ENCODE measurements at regions of chr3 and their contacts with region 1.

Region 1: GRCh38 chr3:53072653-53073552 is 27.0 kb upstream of the SFMBT1 start:
- DNase-seq: peak; percentile 82
- H3K4me3 Mint-ChIP-seq: peak overlapping the region; percentile 79
- H3K27ac Mint-ChIP-seq: no peak overlapping the region
- H3K4me1 Mint-ChIP-seq: no peaks in the 10 kb centered on the region
- H3K27me3 Mint-ChIP-seq: no peaks in the 10 kb centered on the region
- CTCF ChIP-seq: peak; percentile 89

Region 2: GRCh38 chr3:52428151-52429005 is 644.5 kb before region 1 on chr3:
- CTCF ChIA-PET with region 1: no interaction called
- POLR2A ChIA-PET with region 1: no interaction called
- intact Hi-C with region 1: loop called (anchors 2 kb)
- DNase-seq: peak; percentile 83
- H3K4me3 Mint-ChIP-seq: no peak overlapping the region
- H3K27ac Mint-ChIP-seq: no peak overlapping the region
- H3K4me1 Mint-ChIP-seq: no peaks in the 10 kb centered on the region
- H3K27me3 Mint-ChIP-seq: peaks cover 11% of the 10 kb centered on the region
- CTCF ChIP-seq: peak; percentile 63

Region 3: DNA sequence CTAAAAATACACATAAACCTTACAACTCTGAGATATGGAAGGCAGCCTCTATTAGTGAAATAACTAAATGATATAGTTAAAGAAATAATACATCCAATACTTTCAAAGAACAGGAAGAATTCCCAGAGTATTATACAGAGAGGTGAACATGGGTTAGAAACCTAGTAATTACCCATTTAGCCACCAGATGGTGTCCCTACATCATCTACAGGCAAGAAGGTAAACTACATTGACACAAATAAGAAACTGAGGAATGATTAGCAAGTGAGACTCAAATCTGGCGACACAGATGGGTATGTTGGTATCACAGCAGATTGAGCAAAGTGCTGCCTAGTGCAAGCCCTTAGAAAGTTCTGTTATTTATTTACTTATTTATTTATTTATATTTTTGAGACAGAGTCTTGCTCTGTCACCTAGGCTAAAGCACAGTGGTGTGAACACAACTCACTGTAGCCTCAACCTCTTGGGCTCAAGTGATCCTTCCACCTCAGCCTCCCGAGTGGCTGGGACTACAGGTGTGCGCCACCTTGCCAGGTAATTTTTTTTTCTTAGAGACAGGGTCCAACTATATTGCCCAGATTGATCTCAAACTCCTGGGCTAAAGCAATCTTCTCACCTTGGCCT is 330.4 kb before region 1 on chr3:
- CTCF ChIA-PET with region 1: interaction called, 21 read pairs
- POLR2A ChIA-PET with region 1: no interaction called
- intact Hi-C with region 1: loop called (anchors 1 kb)
- DNase-seq: peak; percentile 51
- H3K4me3 Mint-ChIP-seq: no peak overlapping the region
- H3K27ac Mint-ChIP-seq: no peak overlapping the region
- H3K4me1 Mint-ChIP-seq: no peaks in the 10 kb centered on the region
- H3K27me3 Mint-ChIP-seq: no peaks in the 10 kb centered on the region
- CTCF ChIP-seq: peak; percentile 75

Region 4: DNA sequence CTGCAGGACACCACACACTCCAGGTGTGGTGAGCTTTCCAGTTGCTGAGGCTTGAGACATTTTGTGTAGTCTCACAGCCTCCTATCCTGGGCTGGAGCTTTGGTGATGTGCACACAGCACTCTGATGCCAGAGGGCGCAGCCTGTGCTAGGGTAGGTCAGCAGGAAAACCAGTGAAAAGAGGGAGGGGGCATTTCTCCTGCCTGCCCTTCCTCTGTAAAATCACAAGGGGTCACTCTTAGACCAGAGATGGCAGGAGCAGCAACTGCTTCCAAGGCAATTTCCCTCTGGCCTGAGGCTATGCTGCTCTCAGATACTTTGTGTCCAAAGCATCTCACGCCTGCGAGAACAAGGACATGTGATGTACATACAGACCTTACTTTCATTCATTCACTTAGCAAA is 221.6 kb before region 1 on chr3:
- CTCF ChIA-PET with region 1: interaction called, 10 read pairs
- POLR2A ChIA-PET with region 1: no interaction called
- intact Hi-C with region 1: loop called (anchors 1 kb)
- DNase-seq: peak; percentile 61
- H3K4me3 Mint-ChIP-seq: no peak overlapping the region
- H3K27ac Mint-ChIP-seq: no peak overlapping the region
- H3K4me1 Mint-ChIP-seq: no peaks in the 10 kb centered on the region
- H3K27me3 Mint-ChIP-seq: no peaks in the 10 kb centered on the region
- CTCF ChIP-seq: peak; percentile 66

Region 5: GRCh38 chr3:52934630-52935530 is 138.0 kb before region 1 on chr3:
- CTCF ChIA-PET with region 1: interaction called, 9 read pairs
- POLR2A ChIA-PET with region 1: no interaction called
- intact Hi-C with region 1: loop called (anchors 1 kb)
- DNase-seq: peak; percentile 68
- H3K4me3 Mint-ChIP-seq: no peak overlapping the region
- H3K27ac Mint-ChIP-seq: no peak overlapping the region
- H3K4me1 Mint-ChIP-seq: no peaks in the 10 kb centered on the region
- H3K27me3 Mint-ChIP-seq: no peaks in the 10 kb centered on the region
- CTCF ChIP-seq: peak; percentile 53

Region 6: GRCh38 chr3:53083521-53083920 is 10.6 kb after region 1 on chr3:
- CTCF ChIA-PET with region 1: interaction called, 11 read pairs
- POLR2A ChIA-PET with region 1: no interaction called
- intact Hi-C with region 1: no loop called
- DNase-seq: no peak
- H3K4me3 Mint-ChIP-seq: no peak overlapping the region
- H3K27ac Mint-ChIP-seq: no peak overlapping the region
- H3K4me1 Mint-ChIP-seq: no peaks in the 10 kb centered on the region
- H3K27me3 Mint-ChIP-seq: no peaks in the 10 kb centered on the region
- CTCF ChIP-seq: no peak

Measured in MCF 10A (cell line).